Dorsolateral prefrontal cortex (tissue), 120 donors: ENCODE measurements at regions of chr1 and their contacts with region 1.

Region 1: DNA sequence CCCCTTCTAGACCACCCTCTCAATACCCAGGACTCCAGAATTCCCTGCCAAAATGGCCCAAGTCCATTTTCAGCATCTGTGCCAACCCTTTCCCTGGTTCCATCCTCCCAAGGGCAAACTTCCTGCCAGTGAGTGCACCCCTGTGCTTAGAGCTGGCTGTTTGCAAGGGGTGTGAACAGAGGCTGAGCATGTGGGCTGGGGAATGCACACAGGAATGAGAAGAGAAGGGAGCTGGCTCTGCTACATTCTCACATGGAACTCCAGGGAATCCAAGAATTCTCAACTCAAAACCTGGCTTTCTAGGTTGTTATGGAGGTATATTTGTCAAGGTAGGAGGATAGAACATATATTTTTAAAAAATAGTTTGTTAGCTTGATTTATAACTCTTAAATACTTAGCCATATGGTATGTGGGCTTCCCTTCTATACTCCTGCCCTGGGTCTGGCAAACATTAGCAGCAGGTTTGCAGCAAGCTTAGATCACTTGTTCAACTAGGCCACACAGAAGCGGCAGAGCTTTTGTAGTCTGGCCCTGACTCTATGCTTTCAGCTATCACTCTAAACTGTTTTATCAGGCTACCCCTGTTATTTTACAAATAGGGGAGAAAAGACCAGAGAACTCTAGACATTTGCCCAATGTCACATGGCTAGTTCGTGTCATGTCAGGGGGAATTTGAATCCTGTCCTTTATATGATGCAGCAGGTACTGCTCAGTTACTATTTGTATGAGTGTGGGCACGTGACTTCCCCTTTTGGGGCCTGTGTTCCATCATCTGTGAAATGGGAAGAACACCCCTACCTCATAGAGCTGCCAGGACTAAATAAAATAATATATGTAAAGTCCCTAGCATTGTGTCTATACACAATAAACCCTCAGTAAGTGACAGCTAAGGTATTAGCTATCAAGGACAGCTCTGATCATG is 8.1 kb upstream of the STMN1 start:
- DNase-seq: peak in 2 of 10 donors; percentile 57 to 61
- H3K4me3 ChIP-seq: no peak overlapping the region
- H3K27ac ChIP-seq: peak overlapping the region in 36 of 59 donors; percentile 1 to 77 (median 50)
- H3K27me3 ChIP-seq: no peaks in the 10 kb centered on the region
- CTCF ChIP-seq: no peak

Region 2: GRCh38 chr1:25952841-25953401 is 38.6 kb after region 1 on chr1:
- intact Hi-C with region 1: loop called in 1 of 2 experiments (anchors 1 kb)
- DNase-seq: peak in 5 of 10 donors; percentile 35 to 74 (median 54)
- H3K4me3 ChIP-seq: no peak overlapping the region
- H3K27ac ChIP-seq: peak overlapping the region in 39 of 59 donors; percentile 12 to 83 (median 53)
- H3K27me3 ChIP-seq: no peaks in the 10 kb centered on the region
- CTCF ChIP-seq: no peak